Naive thymus-derived CD8-positive, alpha-beta T cell (primary cell): ENCODE measurements at regions of chr6 and their contacts with region 1.

Region 1: GRCh38 chr6:26270903-26271667 is 93.9 kb upstream of the BTN3A2 start:
- DNase-seq: peak; percentile 52 to 93 (median 81)
- ATAC-seq: peak; percentile 18 to 39
- H3K4me3 Mint-ChIP-seq: no peak overlapping the region
- H3K27ac Mint-ChIP-seq: peak overlapping the region in 4 of 10 donors; percentile 20 to 97 (median 40)
- H3K4me1 Mint-ChIP-seq: peaks cover 4 to 28% (median 11%) of the 10 kb centered on the region in 4 donors
- H3K27me3 Mint-ChIP-seq: no peaks in the 10 kb centered on the region

Region 2: GRCh38 chr6:26103770-26104456 is 167.2 kb before region 1 on chr6:
- POLR2A ChIA-PET with region 1: interaction called, 19 read pairs
- DNase-seq: peak; percentile 71 to 97 (median 94)
- ATAC-seq: peak; percentile 91 to 92
- H3K4me3 Mint-ChIP-seq: peak overlapping the region; percentile 87 to 93 (median 89)
- H3K27ac Mint-ChIP-seq: peak overlapping the region; percentile 96 to 100 (median 98)
- H3K4me1 Mint-ChIP-seq: peaks cover 10 to 20% (median 14%) of the 10 kb centered on the region in 4 donors
- H3K27me3 Mint-ChIP-seq: peaks cover 0 to 4% (median 0%) of the 10 kb centered on the region in 5 donors

Region 3: DNA sequence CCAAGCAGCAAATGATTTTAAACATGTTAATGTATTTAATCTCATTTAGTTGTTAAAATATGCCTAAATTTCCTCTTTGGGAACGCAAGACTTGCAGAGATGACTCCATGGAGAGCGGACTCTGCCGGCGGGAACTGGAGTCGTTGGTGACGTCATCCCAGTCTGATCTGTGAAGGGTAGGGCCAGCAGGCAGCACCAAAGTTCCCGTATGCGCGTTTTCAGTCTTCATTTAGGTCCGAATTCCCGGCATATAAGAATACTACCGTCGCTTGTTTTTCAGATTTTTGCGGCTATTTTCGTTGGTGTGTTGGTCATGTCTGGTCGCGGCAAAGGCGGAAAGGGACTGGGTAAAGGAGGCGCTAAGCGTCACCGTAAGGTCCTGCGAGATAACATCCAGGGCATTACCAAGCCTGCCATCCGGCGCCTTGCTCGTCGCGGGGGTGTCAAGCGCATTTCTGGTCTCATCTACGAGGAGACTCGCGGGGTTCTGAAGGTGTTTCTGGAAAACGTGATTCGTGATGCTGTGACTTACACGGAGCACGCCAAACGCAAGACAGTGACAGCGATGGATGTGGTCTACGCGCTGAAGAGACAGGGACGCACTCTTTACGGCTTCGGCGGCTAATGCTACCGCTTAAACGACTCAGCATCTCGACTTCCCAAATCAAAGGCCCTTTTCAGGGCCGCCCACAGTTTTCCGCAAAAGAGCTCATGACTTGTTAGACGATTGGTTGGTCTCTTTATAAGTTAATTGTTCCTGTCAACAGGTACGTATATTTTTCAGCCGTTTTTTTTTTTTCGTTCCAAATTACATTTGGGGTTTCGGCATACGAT is 66.5 kb before region 1 on chr6:
- POLR2A ChIA-PET with region 1: interaction called, 218 read pairs
- DNase-seq: peak; percentile 69 to 97 (median 88)
- ATAC-seq: peak; percentile 68 to 71
- H3K4me3 Mint-ChIP-seq: no peak overlapping the region
- H3K27ac Mint-ChIP-seq: no peak overlapping the region
- H3K4me1 Mint-ChIP-seq: peaks cover 14 to 36% (median 26%) of the 10 kb centered on the region in 4 donors
- H3K27me3 Mint-ChIP-seq: peaks cover 0 to 4% (median 0%) of the 10 kb centered on the region in 5 donors

Region 4: GRCh38 chr6:26234421-26235296 is 36.4 kb before region 1 on chr6:
- POLR2A ChIA-PET with region 1: interaction called, 209 read pairs
- DNase-seq: peak; percentile 41 to 91 (median 86)
- ATAC-seq: peak; percentile 69
- H3K4me3 Mint-ChIP-seq: peak overlapping the region; percentile 91 to 99 (median 95)
- H3K27ac Mint-ChIP-seq: peak overlapping the region; percentile 95 to 100 (median 97)
- H3K4me1 Mint-ChIP-seq: peaks cover 12 to 37% (median 32%) of the 10 kb centered on the region in 4 donors
- H3K27me3 Mint-ChIP-seq: no peaks in the 10 kb centered on the region

Region 5: GRCh38 chr6:26249957-26250697 is 21.0 kb before region 1 on chr6:
- POLR2A ChIA-PET with region 1: no interaction called
- DNase-seq: peak; percentile 52 to 90 (median 76)
- ATAC-seq: peak; percentile 74 to 82
- H3K4me3 Mint-ChIP-seq: peak overlapping the region; percentile 82 to 99 (median 95)
- H3K27ac Mint-ChIP-seq: peak overlapping the region; percentile 90 to 99 (median 96)
- H3K4me1 Mint-ChIP-seq: peaks cover 11 to 48% (median 42%) of the 10 kb centered on the region in 4 donors
- H3K27me3 Mint-ChIP-seq: no peaks in the 10 kb centered on the region

Region 6: GRCh38 chr6:26304797-26305640 is 33.9 kb after region 1 on chr6:
- POLR2A ChIA-PET with region 1: interaction called, 14 read pairs
- DNase-seq: peak in 9 of 10 donors; percentile 53 to 82 (median 68)
- ATAC-seq: peak; percentile 80 to 82
- H3K4me3 Mint-ChIP-seq: peak overlapping the region; percentile 85 to 99 (median 92)
- H3K27ac Mint-ChIP-seq: peak overlapping the region; percentile 86 to 96 (median 94)
- H3K4me1 Mint-ChIP-seq: peaks cover 21 to 42% (median 33%) of the 10 kb centered on the region in 4 donors
- H3K27me3 Mint-ChIP-seq: no peaks in the 10 kb centered on the region

Region 7: GRCh38 chr6:27146706-27147505 is 875.8 kb after region 1 on chr6:
- POLR2A ChIA-PET with region 1: interaction called, 17 read pairs
- DNase-seq: peak; percentile 37 to 94 (median 82)
- ATAC-seq: peak; percentile 85 to 88
- H3K4me3 Mint-ChIP-seq: no peak overlapping the region
- H3K27ac Mint-ChIP-seq: no peak overlapping the region
- H3K4me1 Mint-ChIP-seq: peaks cover 3 to 25% (median 12%) of the 10 kb centered on the region in 4 donors
- H3K27me3 Mint-ChIP-seq: no peaks in the 10 kb centered on the region